Activated T-helper 2 cell treated with anti-CD3 and anti-CD28 coated beads, Interferon-gamma antibody, Interleukin-2, Interleukin-4, amounts not matched to agents 10 μg/mL and 5 μg/mL and 100 μg/mL, durations not matched to agents 14 hours and 24 hours and 36 hours (primary cell): ENCODE measurements at regions of chr1 and their contacts with region 1.

Region 1: DNA sequence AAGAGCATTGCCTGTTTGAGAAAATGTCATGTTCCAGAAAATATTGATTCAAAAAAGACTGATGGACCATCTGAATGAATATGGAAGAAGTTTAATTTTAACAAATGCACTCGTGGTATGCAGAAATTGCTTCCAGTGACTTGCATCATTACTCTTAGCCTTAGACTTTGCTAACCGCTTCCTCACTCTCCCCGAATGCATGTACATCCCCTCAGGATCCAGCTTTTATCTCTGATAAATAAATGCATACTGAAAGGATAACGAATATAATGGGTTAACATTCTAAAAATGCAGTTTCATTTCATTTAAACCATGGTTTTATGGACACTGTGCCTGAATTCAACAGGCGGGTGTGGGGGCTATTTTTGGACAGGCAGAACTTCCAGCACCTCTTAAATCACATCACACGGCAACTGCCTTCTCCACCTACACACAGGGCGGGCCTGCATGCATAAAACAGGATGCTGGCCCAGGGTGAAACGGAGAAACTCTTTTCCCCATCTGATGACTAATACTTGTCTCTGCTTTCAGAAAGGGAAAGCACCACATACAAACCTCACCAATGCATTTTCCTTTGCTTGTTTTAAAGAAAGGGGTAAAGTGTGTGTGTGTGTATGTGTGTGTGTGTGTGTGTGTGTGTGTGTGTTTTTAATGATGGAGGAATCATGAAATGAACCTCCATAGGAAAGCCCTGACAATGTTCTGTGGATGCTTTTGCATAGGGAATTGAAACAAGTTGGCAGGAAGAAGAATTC is 48.7 kb downstream of the SPAG17 start:
- DNase-seq: no peak
- H3K4me3 Mint-ChIP-seq: no peak overlapping the region
- H3K27ac Mint-ChIP-seq: no peak overlapping the region
- H3K4me1 Mint-ChIP-seq: peaks cover 7% of the 10 kb centered on the region
- H3K27me3 Mint-ChIP-seq: peaks cover 15% of the 10 kb centered on the region

Region 2: GRCh38 chr1:118077331-118078055 is 58.9 kb before region 1 on chr1:
- intact Hi-C with region 1: loop called (anchors 10 kb)
- DNase-seq: no peak
- H3K4me3 Mint-ChIP-seq: no peak overlapping the region
- H3K27ac Mint-ChIP-seq: no peak overlapping the region
- H3K4me1 Mint-ChIP-seq: peaks cover 8% of the 10 kb centered on the region
- H3K27me3 Mint-ChIP-seq: peaks cover 13% of the 10 kb centered on the region

Region 3: DNA sequence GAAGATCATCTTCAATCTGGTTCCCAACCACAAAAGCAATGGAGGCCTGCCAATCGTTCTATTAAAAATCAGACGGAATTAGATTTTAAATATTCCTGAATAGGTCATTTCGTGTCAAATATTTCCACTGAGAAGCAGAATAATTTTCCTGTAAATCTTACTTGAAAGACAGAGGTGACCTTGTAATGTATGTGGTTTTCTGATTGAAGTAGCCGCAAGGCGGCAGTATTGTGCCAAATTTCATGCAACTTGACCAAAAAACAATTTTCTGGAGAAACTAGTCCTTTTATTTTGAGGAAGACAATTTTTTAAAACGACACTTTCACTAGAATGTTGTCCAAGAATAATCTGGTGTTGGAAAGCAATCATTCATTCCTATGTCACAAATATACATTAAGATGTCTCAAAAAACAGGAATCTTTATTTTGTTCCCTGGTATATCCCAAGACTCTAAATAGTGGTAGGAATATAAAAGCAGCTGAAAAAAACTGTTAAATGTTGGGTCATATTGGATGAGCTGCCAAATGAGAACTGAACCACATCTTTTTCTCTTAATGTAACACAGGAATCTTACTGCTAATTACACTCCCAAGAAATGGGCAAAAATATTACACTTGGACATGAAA is 15.1 kb after region 1 on chr1:
- intact Hi-C with region 1: no loop called
- DNase-seq: no peak
- H3K4me3 Mint-ChIP-seq: no peak overlapping the region
- H3K27ac Mint-ChIP-seq: no peak overlapping the region
- H3K4me1 Mint-ChIP-seq: no peaks in the 10 kb centered on the region
- H3K27me3 Mint-ChIP-seq: no peaks in the 10 kb centered on the region

Region 4: DNA sequence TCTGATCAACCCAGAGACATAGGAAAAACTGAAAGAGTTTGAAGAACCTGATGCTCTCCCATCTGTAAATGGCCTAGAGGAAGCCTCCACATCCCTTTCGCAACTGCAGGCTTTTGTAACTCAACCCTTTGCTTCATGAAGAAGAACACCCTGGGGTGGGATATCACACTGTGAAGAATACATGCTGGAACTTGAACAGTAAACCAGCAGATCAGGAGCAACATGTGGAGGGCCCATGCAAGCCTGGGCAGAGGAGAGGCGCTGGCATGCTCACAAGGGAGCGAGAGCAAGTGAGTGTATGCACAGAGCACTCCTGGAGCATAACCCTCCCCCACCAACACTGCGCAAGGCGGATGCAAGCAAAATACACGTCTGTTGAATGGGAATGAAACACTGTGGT is 73.3 kb after region 1 on chr1:
- intact Hi-C with region 1: no loop called
- DNase-seq: no peak
- H3K4me3 Mint-ChIP-seq: no peak overlapping the region
- H3K27ac Mint-ChIP-seq: no peak overlapping the region
- H3K4me1 Mint-ChIP-seq: no peaks in the 10 kb centered on the region
- H3K27me3 Mint-ChIP-seq: no peaks in the 10 kb centered on the region